OCI-LY7 (cell line): ENCODE measurements at regions of chr1 and their contacts with region 1.

Region 1: GRCh38 chr1:27609210-27609555 is 5.2 kb upstream of the AHDC1 start:
- DNase-seq: no peak
- H3K4me3 ChIP-seq: peak overlapping the region; percentile 41
- H3K27ac ChIP-seq: peak overlapping the region; percentile 84
- H3K4me1 ChIP-seq: peaks cover 67% of the 10 kb centered on the region
- CTCF ChIP-seq: no peak

Region 2: GRCh38 chr1:26754086-26754874 is 854.9 kb before region 1 on chr1:
- CTCF ChIA-PET with region 1: no interaction called
- POLR2A ChIA-PET with region 1: no interaction called
- intact Hi-C with region 1: no loop called
- DNase-seq: no peak
- H3K4me3 ChIP-seq: no peak overlapping the region
- H3K27ac ChIP-seq: no peak overlapping the region
- H3K4me1 ChIP-seq: no peaks in the 10 kb centered on the region
- CTCF ChIP-seq: no peak

Region 3: GRCh38 chr1:27473755-27474154 is 135.4 kb before region 1 on chr1:
- CTCF ChIA-PET with region 1: no interaction called
- POLR2A ChIA-PET with region 1: interaction called, 10 read pairs
- intact Hi-C with region 1: no loop called
- DNase-seq: no peak
- H3K4me3 ChIP-seq: no peak overlapping the region
- H3K27ac ChIP-seq: no peak overlapping the region
- H3K4me1 ChIP-seq: peaks cover 67% of the 10 kb centered on the region
- CTCF ChIP-seq: no peak

Region 4: GRCh38 chr1:27589841-27590426 is 19.2 kb before region 1 on chr1:
- CTCF ChIA-PET with region 1: no interaction called
- POLR2A ChIA-PET with region 1: no interaction called
- intact Hi-C with region 1: no loop called
- DNase-seq: no peak
- H3K4me3 ChIP-seq: no peak overlapping the region
- H3K27ac ChIP-seq: no peak overlapping the region
- H3K4me1 ChIP-seq: no peaks in the 10 kb centered on the region
- CTCF ChIP-seq: no peak

Region 5: DNA sequence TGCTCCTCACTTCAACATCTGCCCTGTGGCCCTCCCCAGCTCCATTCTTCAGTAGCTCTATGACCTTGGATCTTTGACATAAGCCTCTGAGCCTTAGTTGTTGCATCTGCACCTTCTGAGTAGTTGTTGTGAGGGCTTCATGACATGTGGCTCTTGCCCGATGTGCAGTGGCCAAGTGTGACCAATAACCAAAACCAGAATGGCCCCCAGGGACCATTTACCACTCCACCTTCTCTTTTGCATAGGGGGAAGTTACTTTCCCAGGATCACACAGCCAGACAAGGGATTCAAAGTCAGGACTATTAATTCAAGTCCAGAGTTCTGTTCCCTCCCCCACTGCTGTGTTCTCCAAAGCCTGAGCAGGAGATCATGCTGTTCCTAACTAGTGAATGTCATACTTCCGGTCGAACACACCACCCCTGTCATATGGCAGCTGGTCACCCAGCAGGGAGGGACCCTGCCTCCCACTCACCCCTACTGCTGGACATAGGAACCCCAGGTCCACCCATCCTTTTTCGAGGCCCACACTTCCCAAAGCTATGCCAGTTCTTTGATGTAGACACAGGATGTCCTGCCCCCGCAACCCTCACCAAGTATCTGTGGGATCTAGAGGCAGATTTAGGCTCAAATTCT is 21.8 kb after region 1 on chr1:
- CTCF ChIA-PET with region 1: interaction called, 3 read pairs
- POLR2A ChIA-PET with region 1: interaction called, 3 read pairs
- intact Hi-C with region 1: loop called (anchors 1 kb)
- DNase-seq: no peak
- H3K4me3 ChIP-seq: peak overlapping the region; percentile 23
- H3K27ac ChIP-seq: peak overlapping the region; percentile 51
- H3K4me1 ChIP-seq: peaks cover 74% of the 10 kb centered on the region
- CTCF ChIP-seq: no peak